ENCODE measurements at regions of chr15 and their contacts with region 1.

Region 1: GRCh38 chr15:42359986-42360385 is 685 bp downstream of the CAPN3 start:
- DNase-seq: peak; percentile 58 to 79
- ATAC-seq: peak; percentile 62 to 65
- H3K4me3 ChIP-seq: peak overlapping the region; percentile 52 to 62 (median 60)
- H3K27ac ChIP-seq: peak overlapping the region; percentile 93 to 97 (median 96)
- H3K4me1 ChIP-seq: peaks cover 59 to 61% of the 10 kb centered on the region in 2 donors
- H3K27me3 ChIP-seq: no peaks in the 10 kb centered on the region
- CTCF ChIP-seq: no peak
- POLR2A ChIP-seq: no peak

Region 2: GRCh38 chr15:42332331-42332730 is 27.7 kb before region 1 on chr15:
- in situ Hi-C with region 1: no loop called
- intact Hi-C with region 1: loop called (anchors 2 kb)
- DNase-seq: no peak
- ATAC-seq: no peak
- H3K4me3 ChIP-seq: no peak overlapping the region
- H3K27ac ChIP-seq: peak overlapping the region; percentile 84 to 90 (median 87)
- H3K4me1 ChIP-seq: peaks cover 23 to 30% of the 10 kb centered on the region in 2 donors
- H3K27me3 ChIP-seq: no peaks in the 10 kb centered on the region
- CTCF ChIP-seq: no peak
- POLR2A ChIP-seq: no peak

Region 3: GRCh38 chr15:42344763-42345162 is 15.2 kb before region 1 on chr15:
- in situ Hi-C with region 1: no loop called
- intact Hi-C with region 1: loop called (anchors 1 kb)
- DNase-seq: peak; percentile 62 to 70
- ATAC-seq: peak; percentile 93 to 94
- H3K4me3 ChIP-seq: peak overlapping the region in 1 of 4 donors; percentile 16
- H3K27ac ChIP-seq: peak overlapping the region; percentile 85 to 92 (median 88)
- H3K4me1 ChIP-seq: peaks cover 32 to 39% of the 10 kb centered on the region in 2 donors
- H3K27me3 ChIP-seq: no peaks in the 10 kb centered on the region
- CTCF ChIP-seq: no peak
- POLR2A ChIP-seq: no peak

Region 4: DNA sequence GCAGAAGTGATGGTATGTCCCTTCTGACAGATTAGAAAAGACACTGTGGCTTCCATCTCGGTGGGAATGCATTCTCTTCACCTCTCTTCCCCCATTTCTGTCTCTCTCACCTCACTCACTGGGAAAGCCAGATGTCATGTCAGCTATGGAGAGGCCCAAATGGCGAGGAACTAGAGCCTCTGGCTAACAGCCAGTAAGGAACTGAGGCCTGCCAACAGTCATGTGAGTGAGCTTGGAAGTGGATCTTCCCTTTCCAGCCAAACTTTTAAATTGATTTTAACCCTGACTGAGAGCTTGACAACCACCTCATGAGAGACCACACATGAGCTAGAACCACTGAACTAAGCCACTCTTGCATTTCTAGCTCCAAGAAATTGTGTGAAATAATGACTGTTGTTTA is 412.2 kb after region 1 on chr15:
- in situ Hi-C with region 1: no loop called
- intact Hi-C with region 1: no loop called
- DNase-seq: peak; percentile 8 to 62
- ATAC-seq: peak in 1 of 2 donors; percentile 82
- H3K4me3 ChIP-seq: no peak overlapping the region
- H3K27ac ChIP-seq: peak overlapping the region in 1 of 4 donors; percentile 14
- H3K4me1 ChIP-seq: peaks cover 6 to 28% of the 10 kb centered on the region in 2 donors
- H3K27me3 ChIP-seq: no peaks in the 10 kb centered on the region
- CTCF ChIP-seq: no peak
- POLR2A ChIP-seq: no peak